Activated naive CD4-positive, alpha-beta T cell treated with anti-CD3 and anti-CD28 coated beads for 36 hours (primary cell): ENCODE measurements at regions of chr14 and their contacts with region 1.

Region 1: GRCh38 chr14:63852817-63853731 is at the start of gene SYNE2:
- DNase-seq: peak; percentile 84
- H3K4me3 Mint-ChIP-seq: peak within 1 kb of the TSS; percentile 93
- H3K27ac Mint-ChIP-seq: peak within 1 kb of the TSS; percentile 87
- H3K4me1 Mint-ChIP-seq: peaks cover 38% of the 10 kb centered on the region
- H3K27me3 Mint-ChIP-seq: no peaks in the 10 kb centered on the region
- total RNA-seq, gene SYNE2: 22.1 to 22.3 TPM

Region 2: GRCh38 chr14:63543000-63543825 is 309.9 kb before region 1 on chr14 and contains the start of gene PPP2R5E:
- CTCF ChIA-PET with region 1: no interaction called
- intact Hi-C with region 1: loop called (anchors 5 kb)
- DNase-seq: peak; percentile 99
- H3K4me3 Mint-ChIP-seq: peak within 1 kb of the TSS; percentile 96
- H3K27ac Mint-ChIP-seq: peak within 1 kb of the TSS; percentile 83
- H3K4me1 Mint-ChIP-seq: peaks cover 25% of the 10 kb centered on the region
- H3K27me3 Mint-ChIP-seq: no peaks in the 10 kb centered on the region
- total RNA-seq, gene PPP2R5E: 30.0 to 32.5 TPM

Region 3: GRCh38 chr14:63910583-63911363 is 57.7 kb after region 1 on chr14:
- CTCF ChIA-PET with region 1: interaction called, 4 read pairs
- intact Hi-C with region 1: loop called (anchors 2 kb)
- DNase-seq: peak; percentile 54
- H3K4me3 Mint-ChIP-seq: peak overlapping the region; percentile 0
- H3K27ac Mint-ChIP-seq: peak overlapping the region; percentile 37
- H3K4me1 Mint-ChIP-seq: peaks cover 46% of the 10 kb centered on the region
- H3K27me3 Mint-ChIP-seq: no peaks in the 10 kb centered on the region

Region 4: GRCh38 chr14:63988579-63988978 is 135.5 kb after region 1 on chr14:
- CTCF ChIA-PET with region 1: no interaction called
- intact Hi-C with region 1: no loop called
- DNase-seq: no peak
- H3K4me3 Mint-ChIP-seq: no peak overlapping the region
- H3K27ac Mint-ChIP-seq: no peak overlapping the region
- H3K4me1 Mint-ChIP-seq: no peaks in the 10 kb centered on the region
- H3K27me3 Mint-ChIP-seq: no peaks in the 10 kb centered on the region

Region 5: DNA sequence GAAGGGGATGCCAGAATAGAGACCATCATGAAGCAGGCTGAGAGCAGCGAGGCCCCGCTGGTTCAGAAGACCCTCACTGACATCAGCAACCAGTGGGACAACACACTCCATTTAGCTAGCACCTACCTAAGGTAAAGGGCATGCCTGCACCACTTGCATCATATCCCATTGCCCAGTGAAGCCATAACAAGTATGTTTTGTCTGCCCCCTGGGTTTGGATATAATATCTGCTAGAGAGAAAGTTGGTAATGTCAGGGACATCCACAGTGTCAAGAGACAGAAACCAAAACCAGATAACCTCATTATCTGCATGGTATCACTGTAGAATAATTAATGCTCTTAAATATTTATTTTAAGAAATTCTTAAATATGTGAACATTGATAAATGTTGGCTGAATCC is 173.5 kb after region 1 on chr14:
- CTCF ChIA-PET with region 1: interaction called, 3 read pairs
- intact Hi-C with region 1: loop called (anchors 1 kb)
- DNase-seq: no peak
- H3K4me3 Mint-ChIP-seq: no peak overlapping the region
- H3K27ac Mint-ChIP-seq: no peak overlapping the region
- H3K4me1 Mint-ChIP-seq: no peaks in the 10 kb centered on the region
- H3K27me3 Mint-ChIP-seq: no peaks in the 10 kb centered on the region

Region 6: DNA sequence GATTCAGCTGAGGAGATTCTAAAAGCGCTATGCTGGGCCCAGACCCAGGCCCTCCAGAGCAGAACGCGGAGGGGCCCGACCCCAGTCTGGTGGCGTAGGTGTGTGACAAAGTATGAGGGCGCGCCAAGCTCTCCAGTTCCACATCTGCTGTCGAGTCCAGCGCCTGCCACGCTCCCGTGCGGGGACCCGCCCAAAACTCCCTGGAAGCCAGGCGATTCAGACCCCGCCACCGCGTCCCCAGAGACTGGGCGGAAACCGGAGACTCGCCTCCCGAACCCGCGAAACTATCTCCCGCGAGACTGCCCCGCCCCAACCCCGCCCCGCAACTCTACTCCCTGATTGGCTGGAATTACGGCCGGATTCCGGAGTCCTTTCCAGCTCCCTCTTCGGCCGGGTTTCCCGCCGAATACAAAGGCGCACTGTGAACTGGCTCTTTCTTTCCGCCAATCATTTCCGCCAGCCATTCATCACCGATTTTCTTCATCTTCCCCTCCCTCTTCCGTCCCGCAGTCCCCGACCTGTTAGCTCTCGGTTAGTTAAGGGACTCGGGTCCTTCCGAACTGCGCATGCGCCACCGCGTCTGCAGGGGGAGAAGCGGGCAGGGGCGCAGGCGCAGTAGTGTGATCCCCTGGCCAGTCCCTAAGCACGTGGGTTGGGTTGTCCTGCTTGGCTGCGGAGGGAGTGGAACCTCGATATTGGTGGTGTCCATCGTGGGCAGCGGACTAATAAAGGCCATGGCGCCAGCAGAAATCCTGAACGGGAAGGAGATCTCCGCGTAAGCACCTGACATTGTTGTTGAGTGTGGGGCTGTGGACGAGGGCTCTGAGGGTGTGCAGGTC is 534.8 kb after region 1 on chr14 and contains the start of gene MTHFD1:
- CTCF ChIA-PET with region 1: no interaction called
- intact Hi-C with region 1: loop called (anchors 5 kb)
- DNase-seq: peak; percentile 99
- H3K4me3 Mint-ChIP-seq: peak within 1 kb of the TSS; percentile 92
- H3K27ac Mint-ChIP-seq: peak within 1 kb of the TSS; percentile 94
- H3K4me1 Mint-ChIP-seq: peaks cover 26% of the 10 kb centered on the region
- H3K27me3 Mint-ChIP-seq: no peaks in the 10 kb centered on the region
- total RNA-seq, gene MTHFD1: 240 to 247 TPM

Region 7: GRCh38 chr14:64928239-64929013 is 1075.4 kb after region 1 on chr14:
- CTCF ChIA-PET with region 1: no interaction called
- intact Hi-C with region 1: loop called (anchors 10 kb)
- DNase-seq: no peak
- H3K4me3 Mint-ChIP-seq: no peak overlapping the region
- H3K27ac Mint-ChIP-seq: no peak overlapping the region
- H3K4me1 Mint-ChIP-seq: peaks cover 25% of the 10 kb centered on the region
- H3K27me3 Mint-ChIP-seq: no peaks in the 10 kb centered on the region